Activated CD4-positive, alpha-beta T cell treated with anti-CD3 and anti-CD28 coated beads for 36 hours (primary cell): ENCODE measurements at regions of chr15 and their contacts with region 1.

Region 1: GRCh38 chr15:38683382-38684242 is 119.0 kb upstream of the RASGRP1 start:
- DNase-seq: peak; percentile 86
- ATAC-seq: peak; percentile 73
- H3K4me3 Mint-ChIP-seq: no peak overlapping the region
- H3K27ac Mint-ChIP-seq: peak overlapping the region; percentile 80
- H3K4me1 Mint-ChIP-seq: peaks cover 79% of the 10 kb centered on the region
- H3K27me3 Mint-ChIP-seq: no peaks in the 10 kb centered on the region

Region 2: DNA sequence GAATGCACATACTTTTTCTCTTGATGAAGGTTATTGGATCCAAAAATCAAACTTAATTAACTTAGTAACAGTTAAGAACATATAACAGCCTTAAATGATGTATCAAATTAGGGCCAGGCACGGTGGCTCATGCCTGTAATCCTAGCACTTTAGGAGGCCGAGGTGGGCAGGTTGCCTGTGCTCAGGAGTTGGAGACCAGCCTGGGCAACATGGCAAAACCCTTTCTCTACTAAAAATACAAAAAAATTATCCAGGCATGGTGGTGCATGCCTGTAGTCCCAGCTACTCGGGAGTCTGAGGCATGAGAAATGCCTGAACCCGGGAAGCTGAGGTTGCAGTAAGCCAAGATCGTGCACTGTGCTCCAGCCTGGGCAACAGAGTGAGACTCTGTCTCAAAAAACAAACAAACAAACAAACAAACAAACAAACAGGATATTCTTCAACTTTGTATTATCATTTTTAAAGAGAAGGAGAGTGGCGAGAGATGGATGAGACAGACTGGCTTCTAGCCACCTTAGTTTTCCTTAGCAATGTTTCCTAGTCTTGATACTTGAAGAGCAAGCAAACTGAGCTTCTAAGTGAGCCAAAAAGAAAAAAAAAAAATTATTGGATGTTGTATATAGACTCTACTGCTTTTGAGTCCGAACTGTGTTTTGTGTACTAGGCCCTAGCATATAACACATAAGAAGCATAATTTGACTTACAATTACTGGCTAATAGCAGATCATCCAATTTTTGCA is 417.2 kb before region 1 on chr15:
- CTCF ChIA-PET with region 1: no interaction called
- POLR2A ChIA-PET with region 1: no interaction called
- intact Hi-C with region 1: no loop called
- DNase-seq: no peak
- ATAC-seq: no peak
- H3K4me3 Mint-ChIP-seq: no peak overlapping the region
- H3K27ac Mint-ChIP-seq: no peak overlapping the region
- H3K4me1 Mint-ChIP-seq: no peaks in the 10 kb centered on the region
- H3K27me3 Mint-ChIP-seq: peaks cover 2% of the 10 kb centered on the region

Region 3: GRCh38 chr15:38398134-38398533 is 285.5 kb before region 1 on chr15:
- CTCF ChIA-PET with region 1: no interaction called
- POLR2A ChIA-PET with region 1: no interaction called
- intact Hi-C with region 1: no loop called
- DNase-seq: no peak
- ATAC-seq: no peak
- H3K4me3 Mint-ChIP-seq: no peak overlapping the region
- H3K27ac Mint-ChIP-seq: no peak overlapping the region
- H3K4me1 Mint-ChIP-seq: no peaks in the 10 kb centered on the region
- H3K27me3 Mint-ChIP-seq: peaks cover 15% of the 10 kb centered on the region

Region 4: DNA sequence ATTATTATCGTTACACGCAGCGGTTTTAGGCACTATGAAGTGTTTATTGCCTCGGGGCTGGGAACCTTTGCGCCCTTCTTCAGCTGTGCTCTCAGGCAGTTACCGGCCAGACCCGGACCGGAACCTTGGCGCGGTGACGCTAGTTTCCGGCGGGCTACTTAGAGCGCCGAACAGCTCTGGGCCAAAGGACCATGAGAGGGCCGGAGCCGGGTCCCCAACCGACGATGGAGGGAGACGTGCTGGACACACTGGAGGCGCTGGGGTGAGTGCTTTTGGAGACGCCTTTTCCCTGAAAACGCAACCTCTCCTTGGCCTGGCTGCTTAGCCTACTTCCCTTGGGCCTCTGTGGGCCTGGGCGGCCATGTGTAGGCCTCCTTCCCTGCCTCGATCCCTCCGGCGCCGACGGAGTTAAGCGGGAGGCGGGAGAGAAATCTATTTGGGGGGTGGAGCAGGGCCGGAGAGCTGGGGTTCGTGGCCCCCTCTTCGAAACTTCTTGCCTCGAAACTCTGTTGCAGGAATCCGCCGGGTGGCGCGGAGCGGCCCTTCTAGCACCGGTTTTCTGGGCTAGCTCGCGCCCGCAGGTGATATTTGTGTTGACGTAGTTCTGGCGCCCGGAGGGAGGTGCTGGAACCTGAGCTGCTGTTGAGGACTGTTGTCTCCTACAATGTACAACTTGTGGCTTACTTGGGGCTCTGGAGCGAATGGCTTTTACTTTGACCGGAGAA is 229.5 kb before region 1 on chr15 and contains the start of gene FAM98B:
- CTCF ChIA-PET with region 1: interaction called, 45 read pairs
- POLR2A ChIA-PET with region 1: no interaction called
- intact Hi-C with region 1: no loop called
- DNase-seq: peak; percentile 92
- ATAC-seq: peak; percentile 92
- H3K4me3 Mint-ChIP-seq: peak within 1 kb of the TSS; percentile 78
- H3K27ac Mint-ChIP-seq: peak within 1 kb of the TSS; percentile 93
- H3K4me1 Mint-ChIP-seq: peaks cover 31% of the 10 kb centered on the region
- H3K27me3 Mint-ChIP-seq: no peaks in the 10 kb centered on the region
- total RNA-seq, gene FAM98B: 54.2 to 81.9 TPM

Region 5: GRCh38 chr15:38618242-38618955 is 65.2 kb before region 1 on chr15:
- CTCF ChIA-PET with region 1: interaction called, 100 read pairs
- POLR2A ChIA-PET with region 1: interaction called, 48 read pairs
- intact Hi-C with region 1: no loop called
- DNase-seq: no peak
- ATAC-seq: no peak
- H3K4me3 Mint-ChIP-seq: no peak overlapping the region
- H3K27ac Mint-ChIP-seq: no peak overlapping the region
- H3K4me1 Mint-ChIP-seq: peaks cover 22% of the 10 kb centered on the region
- H3K27me3 Mint-ChIP-seq: no peaks in the 10 kb centered on the region

Region 6: GRCh38 chr15:38647683-38648082 is 35.9 kb before region 1 on chr15:
- CTCF ChIA-PET with region 1: interaction called, 44 read pairs
- POLR2A ChIA-PET with region 1: interaction called, 12 read pairs
- intact Hi-C with region 1: loop called (anchors 2 kb)
- DNase-seq: no peak
- ATAC-seq: no peak
- H3K4me3 Mint-ChIP-seq: no peak overlapping the region
- H3K27ac Mint-ChIP-seq: peak overlapping the region; percentile 34
- H3K4me1 Mint-ChIP-seq: peaks cover 75% of the 10 kb centered on the region
- H3K27me3 Mint-ChIP-seq: no peaks in the 10 kb centered on the region

Region 7: DNA sequence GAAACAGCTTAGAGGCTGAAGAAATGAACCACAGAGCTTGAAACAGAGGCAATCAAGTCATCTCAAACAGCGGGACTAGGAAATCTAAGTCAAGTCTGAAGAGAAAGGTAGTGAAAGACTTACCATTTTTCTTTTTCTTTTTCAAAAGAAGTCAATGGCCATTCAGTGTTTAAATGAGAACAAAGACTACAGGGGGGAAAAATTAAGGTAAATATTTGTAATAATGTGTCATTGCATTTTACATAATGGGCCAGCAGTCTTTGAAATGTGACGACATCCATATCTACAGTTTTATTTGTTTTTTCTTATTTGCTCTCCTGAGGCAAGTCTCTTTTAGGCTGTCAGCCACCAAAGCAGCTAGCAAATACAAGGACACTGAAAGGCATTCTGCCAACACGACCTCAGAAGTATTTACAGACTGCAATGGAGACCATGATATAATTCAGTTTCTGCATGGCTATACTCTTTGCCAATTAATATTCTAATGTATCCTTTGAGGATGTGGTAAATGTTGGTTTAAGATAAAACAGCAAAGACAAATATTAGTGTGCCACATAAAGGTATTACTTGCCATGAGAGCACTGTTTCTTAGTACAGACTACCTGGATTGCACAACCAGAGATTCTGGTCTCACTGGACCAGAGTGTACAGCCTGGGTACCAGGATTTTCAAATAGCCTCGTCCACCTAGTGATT is 590.3 kb after region 1 on chr15:
- CTCF ChIA-PET with region 1: no interaction called
- POLR2A ChIA-PET with region 1: no interaction called
- intact Hi-C with region 1: no loop called
- DNase-seq: no peak
- ATAC-seq: no peak
- H3K4me3 Mint-ChIP-seq: no peak overlapping the region
- H3K27ac Mint-ChIP-seq: no peak overlapping the region
- H3K4me1 Mint-ChIP-seq: no peaks in the 10 kb centered on the region
- H3K27me3 Mint-ChIP-seq: peaks cover 3% of the 10 kb centered on the region